ENCODE measurements at regions of chr18 and their contacts with region 1.

Region 1: GRCh38 chr18:14978962-14979535 is 231.1 kb downstream of the ANKRD30B start:
- DNase-seq: peak; percentile 6
- H3K4me3 ChIP-seq: no peak overlapping the region
- H3K27ac ChIP-seq: no peak overlapping the region
- H3K4me1 ChIP-seq: peaks cover 11% of the 10 kb centered on the region
- H3K27me3 ChIP-seq: no peaks in the 10 kb centered on the region
- CTCF ChIP-seq: peak; percentile 45 to 46
- POLR2A ChIP-seq: no peak

Region 2: DNA sequence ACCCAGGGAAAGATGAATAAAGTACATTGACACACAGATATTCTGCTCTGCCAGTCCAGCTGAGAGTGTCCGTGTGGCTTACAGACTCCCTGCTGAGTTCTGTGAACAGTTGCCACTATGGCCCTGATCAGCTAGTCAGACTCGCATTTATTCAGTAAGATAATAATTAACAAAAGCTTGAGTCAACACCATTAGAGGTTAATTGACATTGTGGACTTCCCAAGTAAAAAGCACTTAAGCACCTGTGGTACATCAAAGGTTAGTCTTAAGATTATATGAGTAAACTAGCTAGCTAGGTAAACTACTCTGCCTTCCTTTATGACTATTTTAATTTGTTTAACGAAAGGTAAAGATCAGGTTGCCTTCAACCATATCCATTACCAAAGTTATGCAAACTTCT is 197.4 kb before region 1 on chr18:
- CTCF ChIA-PET with region 1: no interaction called
- POLR2A ChIA-PET with region 1: no interaction called
- dilution Hi-C with region 1: no loop called
- intact Hi-C with region 1: no loop called
- DNase-seq: no peak
- H3K4me3 ChIP-seq: no peak overlapping the region
- H3K27ac ChIP-seq: no peak overlapping the region
- H3K4me1 ChIP-seq: no peaks in the 10 kb centered on the region
- H3K27me3 ChIP-seq: no peaks in the 10 kb centered on the region
- CTCF ChIP-seq: no peak
- POLR2A ChIP-seq: no peak

Region 3: DNA sequence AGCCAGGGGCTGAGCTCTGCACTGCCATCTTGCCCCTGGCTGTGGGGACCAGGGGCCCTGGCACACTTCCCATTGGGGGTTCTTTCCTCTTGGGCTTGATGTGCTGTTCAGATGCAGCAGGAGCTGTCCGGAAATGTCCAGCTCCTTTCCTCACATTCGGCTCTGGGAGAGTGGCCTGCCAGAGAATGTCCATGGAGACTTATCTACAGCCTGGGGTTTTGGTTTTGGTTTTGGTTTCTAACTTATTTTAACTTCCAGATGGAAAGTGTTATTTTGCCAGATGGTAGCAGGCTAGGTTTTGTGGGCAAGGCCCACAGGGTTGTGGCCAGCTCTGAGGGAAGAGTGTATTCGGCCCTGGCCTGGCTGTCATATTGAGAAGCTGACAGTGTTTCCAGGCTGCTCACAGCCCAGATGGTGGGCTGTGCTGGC is 53.8 kb before region 1 on chr18:
- CTCF ChIA-PET with region 1: no interaction called
- POLR2A ChIA-PET with region 1: no interaction called
- dilution Hi-C with region 1: no loop called
- intact Hi-C with region 1: loop called (anchors 10 kb)
- DNase-seq: no peak
- H3K4me3 ChIP-seq: no peak overlapping the region
- H3K27ac ChIP-seq: no peak overlapping the region
- H3K4me1 ChIP-seq: no peaks in the 10 kb centered on the region
- H3K27me3 ChIP-seq: no peaks in the 10 kb centered on the region
- CTCF ChIP-seq: no peak
- POLR2A ChIP-seq: no peak

Measured in endothelial cell of umbilical vein (primary cell).